Naive thymus-derived CD4-positive, alpha-beta T cell (primary cell): ENCODE measurements at regions of chr9 and their contacts with region 1.

Region 1: DNA sequence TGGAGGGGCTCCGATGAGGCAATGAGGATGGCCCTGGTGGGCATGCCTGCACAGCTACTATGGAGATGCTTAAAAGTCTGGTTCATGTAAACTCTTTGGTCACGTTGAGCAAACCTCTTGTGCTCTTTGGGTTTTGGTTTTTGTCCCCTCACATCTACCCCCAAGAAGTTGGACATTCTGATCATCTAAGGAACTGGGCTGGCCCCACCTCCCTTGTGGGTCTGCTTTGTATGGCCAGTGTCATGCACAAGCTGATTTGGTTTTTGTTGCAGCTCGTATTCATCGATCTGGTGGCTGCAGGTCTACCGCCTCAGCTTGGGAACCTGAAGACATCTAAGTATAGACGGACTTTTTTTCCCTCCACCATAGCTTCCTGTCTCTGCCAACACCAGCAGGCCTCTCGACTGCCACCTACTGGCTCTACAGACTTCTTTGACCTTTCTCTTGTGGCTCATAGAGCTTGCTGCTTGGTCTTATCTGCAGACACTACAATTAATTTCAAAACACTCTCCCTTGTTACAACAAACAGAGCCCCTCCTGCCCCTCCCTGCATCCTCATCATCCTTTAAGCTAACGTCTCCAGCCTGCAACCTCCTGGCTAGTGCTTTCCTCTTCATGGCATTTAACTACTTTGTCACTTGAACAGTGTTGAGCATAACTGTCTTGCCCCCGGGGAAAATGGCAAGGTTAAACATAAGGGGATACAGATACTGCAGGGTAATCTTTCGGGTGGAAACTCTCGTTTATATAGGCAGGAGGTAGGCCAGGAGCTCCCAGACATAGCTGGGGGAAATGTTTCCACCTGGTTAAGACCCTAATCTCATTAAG is 34.5 kb downstream of the TSTD2 start:
- DNase-seq: peak; percentile 26 to 73 (median 67)
- ATAC-seq: peak; percentile 93
- H3K4me3 ChIP-seq: no peak overlapping the region
- H3K4me3 Mint-ChIP-seq: peak overlapping the region in 9 of 10 donors; percentile 19 to 73 (median 60)
- H3K27ac ChIP-seq: no peak overlapping the region
- H3K27ac Mint-ChIP-seq: peak overlapping the region in 4 of 9 donors; percentile 4 to 49 (median 20)
- H3K4me1 ChIP-seq: peaks cover 4% of the 10 kb centered on the region in 2 donors
- H3K4me1 Mint-ChIP-seq: peaks cover 6 to 8% (median 6%) of the 10 kb centered on the region in 7 donors
- H3K27me3 ChIP-seq: no peaks in the 10 kb centered on the region
- H3K27me3 Mint-ChIP-seq: peaks cover 0 to 2% (median 0%) of the 10 kb centered on the region in 5 donors

Region 2: GRCh38 chr9:97386733-97387503 is 211.8 kb before region 1 on chr9:
- CTCF ChIA-PET with region 1: no interaction called
- POLR2A ChIA-PET with region 1: no interaction called
- intact Hi-C with region 1: loop called in 1 of 2 experiments (anchors 1 kb)
- DNase-seq: peak; percentile 39 to 83 (median 52)
- ATAC-seq: peak; percentile 66
- H3K4me3 ChIP-seq: no peak overlapping the region
- H3K4me3 Mint-ChIP-seq: no peak overlapping the region
- H3K27ac ChIP-seq: no peak overlapping the region
- H3K27ac Mint-ChIP-seq: peak overlapping the region in 2 of 9 donors; percentile 38 to 49
- H3K4me1 ChIP-seq: no peaks in the 10 kb centered on the region
- H3K4me1 Mint-ChIP-seq: peaks cover 0 to 36% (median 5%) of the 10 kb centered on the region in 7 donors
- H3K27me3 ChIP-seq: no peaks in the 10 kb centered on the region
- H3K27me3 Mint-ChIP-seq: peaks cover 4 to 29% (median 13%) of the 10 kb centered on the region in 5 donors

Region 3: DNA sequence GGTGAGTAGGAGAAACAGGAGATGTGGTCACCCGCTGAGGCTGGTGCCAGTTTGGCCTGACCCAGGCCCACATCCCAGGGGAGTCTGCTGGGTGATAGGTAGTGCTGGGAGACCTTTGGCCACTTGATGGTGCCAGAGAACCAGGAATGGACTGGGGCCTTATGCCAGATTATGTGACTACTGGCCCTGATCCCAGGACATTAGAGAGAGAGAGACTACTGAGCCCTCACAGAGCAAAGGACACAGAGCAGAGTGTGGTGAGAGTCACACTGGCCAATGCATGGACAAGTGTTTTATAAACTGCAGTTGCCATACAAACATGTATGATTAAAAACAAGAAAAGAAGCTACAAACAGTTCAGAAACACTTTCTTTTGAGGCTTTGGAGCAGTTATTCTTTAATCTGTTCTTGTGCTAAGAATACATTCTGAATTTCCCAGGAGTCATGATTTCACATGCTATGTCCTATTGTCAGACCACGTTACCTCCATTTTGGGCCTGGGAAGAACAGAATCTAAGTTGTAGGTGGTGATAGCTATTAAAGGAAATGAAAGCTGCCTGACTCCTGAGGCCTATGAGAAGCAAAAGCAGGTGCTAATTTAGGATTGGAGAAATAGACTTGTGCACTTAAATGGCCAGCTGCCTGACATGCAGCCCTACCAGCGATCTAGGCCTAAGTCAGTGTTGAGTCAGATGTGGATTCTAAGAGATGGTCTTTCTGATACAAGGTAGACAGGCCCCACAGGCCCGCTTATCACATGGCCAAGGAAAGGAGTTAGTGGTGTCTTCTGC is 129.8 kb before region 1 on chr9:
- CTCF ChIA-PET with region 1: interaction called, 34 read pairs
- POLR2A ChIA-PET with region 1: interaction called, 3 read pairs
- intact Hi-C with region 1: loop called (anchors 1 kb)
- DNase-seq: peak in 7 of 9 donors; percentile 5 to 44 (median 20)
- ATAC-seq: peak; percentile 54
- H3K4me3 ChIP-seq: no peak overlapping the region
- H3K4me3 Mint-ChIP-seq: no peak overlapping the region
- H3K27ac ChIP-seq: no peak overlapping the region
- H3K27ac Mint-ChIP-seq: peak overlapping the region in 1 of 9 donors; percentile 32
- H3K4me1 ChIP-seq: no peaks in the 10 kb centered on the region
- H3K4me1 Mint-ChIP-seq: peaks cover 0 to 5% (median 0%) of the 10 kb centered on the region in 7 donors
- H3K27me3 ChIP-seq: no peaks in the 10 kb centered on the region
- H3K27me3 Mint-ChIP-seq: no peaks in the 10 kb centered on the region

Region 4: DNA sequence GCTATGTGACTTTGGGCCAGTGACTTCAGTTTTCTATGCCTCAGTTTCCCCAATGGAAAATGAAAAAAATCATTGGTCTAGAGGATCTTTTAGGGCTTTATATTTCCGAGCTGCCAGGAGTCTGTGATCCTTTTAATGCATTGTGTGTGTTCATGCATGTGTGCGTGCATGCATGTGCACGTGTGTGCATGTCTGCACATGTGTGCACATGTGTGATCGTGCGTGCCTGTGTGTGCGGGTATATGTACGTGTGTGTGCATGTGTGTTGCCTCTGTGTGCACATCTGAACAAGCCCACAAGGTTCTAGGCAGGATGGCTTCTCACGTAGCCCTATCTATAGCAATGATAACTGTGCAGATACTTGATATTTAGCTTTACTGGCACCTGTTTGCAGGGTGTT is 61.6 kb before region 1 on chr9:
- CTCF ChIA-PET with region 1: no interaction called
- POLR2A ChIA-PET with region 1: no interaction called
- intact Hi-C with region 1: no loop called
- DNase-seq: no peak
- ATAC-seq: no peak
- H3K4me3 ChIP-seq: no peak overlapping the region
- H3K4me3 Mint-ChIP-seq: no peak overlapping the region
- H3K27ac ChIP-seq: no peak overlapping the region
- H3K27ac Mint-ChIP-seq: no peak overlapping the region
- H3K4me1 ChIP-seq: no peaks in the 10 kb centered on the region
- H3K4me1 Mint-ChIP-seq: no peaks in the 10 kb centered on the region
- H3K27me3 ChIP-seq: no peaks in the 10 kb centered on the region
- H3K27me3 Mint-ChIP-seq: peaks cover 5 to 19% (median 7%) of the 10 kb centered on the region in 5 donors